ENCODE measurements at regions of chrX and their contacts with region 1.

Region 1: GRCh38 chrX:50691820-50692219 is 122.2 kb downstream of the SHROOM4 start:
- H3K4me3 ChIP-seq: no peak overlapping the region
- H3K27ac ChIP-seq: no peak overlapping the region
- H3K4me1 ChIP-seq: no peaks in the 10 kb centered on the region
- CTCF ChIP-seq: peak; percentile 33; the same call in 1 of the 2 replicates

Region 2: DNA sequence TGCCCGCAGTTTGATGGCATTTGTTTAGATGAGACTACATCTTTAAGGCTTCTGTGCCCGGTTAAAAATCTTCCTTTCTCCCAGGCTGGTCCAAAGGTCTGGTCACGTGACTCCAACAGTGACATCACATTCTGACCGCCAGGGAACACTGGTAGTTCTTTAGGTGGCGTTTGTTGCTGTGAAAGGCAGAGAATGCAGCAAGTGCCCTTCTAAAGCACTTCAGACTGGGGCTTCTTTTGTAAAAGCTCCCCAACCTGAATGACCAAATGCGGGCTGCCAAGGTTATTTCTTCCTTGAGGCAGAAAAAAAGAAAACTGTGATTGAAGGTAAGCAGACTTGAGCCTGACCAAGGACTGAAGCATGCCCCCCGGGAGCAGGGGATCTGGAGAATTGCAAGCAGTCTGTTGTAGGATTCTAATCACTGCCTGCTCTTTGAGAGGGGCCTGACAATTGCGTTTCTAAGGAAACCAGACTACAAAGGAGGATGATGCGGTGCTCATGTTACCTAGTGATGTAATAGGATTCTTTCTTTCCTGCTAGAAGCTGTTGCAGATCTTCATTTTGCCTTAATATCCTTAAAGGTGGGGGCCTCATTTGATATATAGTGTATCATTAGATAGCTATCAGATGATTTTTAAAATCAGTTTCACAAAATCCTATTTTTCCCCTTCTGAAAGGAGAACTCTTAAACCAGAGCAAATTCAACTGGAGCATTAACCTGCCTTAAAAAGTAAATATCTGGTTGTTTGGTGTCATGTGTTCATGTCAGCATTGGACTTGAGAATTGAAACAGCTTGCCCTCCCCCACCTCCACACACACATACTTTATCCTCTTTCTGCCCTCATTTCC is 624.2 kb before region 1 on chrX:
- CTCF ChIA-PET with region 1: no interaction called
- POLR2A ChIA-PET with region 1: no interaction called
- H3K4me3 ChIP-seq: peak overlapping the region; percentile 18
- H3K27ac ChIP-seq: no peak overlapping the region
- H3K4me1 ChIP-seq: peaks cover 22% of the 10 kb centered on the region
- CTCF ChIP-seq: no peak

Region 3: GRCh38 chrX:50180073-50180940 is 511.5 kb before region 1 on chrX:
- CTCF ChIA-PET with region 1: no interaction called
- POLR2A ChIA-PET with region 1: no interaction called
- H3K4me3 ChIP-seq: no peak overlapping the region
- H3K27ac ChIP-seq: no peak overlapping the region
- H3K4me1 ChIP-seq: no peaks in the 10 kb centered on the region
- CTCF ChIP-seq: no peak

Region 4: GRCh38 chrX:50680990-50681389 is 10.8 kb before region 1 on chrX:
- CTCF ChIA-PET with region 1: interaction called, 31 read pairs
- POLR2A ChIA-PET with region 1: no interaction called
- H3K4me3 ChIP-seq: no peak overlapping the region
- H3K27ac ChIP-seq: no peak overlapping the region
- H3K4me1 ChIP-seq: no peaks in the 10 kb centered on the region
- CTCF ChIP-seq: no peak

Region 5: GRCh38 chrX:50768801-50769200 is 77.0 kb after region 1 on chrX:
- CTCF ChIA-PET with region 1: no interaction called
- POLR2A ChIA-PET with region 1: no interaction called
- H3K4me3 ChIP-seq: no peak overlapping the region
- H3K27ac ChIP-seq: no peak overlapping the region
- H3K4me1 ChIP-seq: no peaks in the 10 kb centered on the region
- CTCF ChIP-seq: no peak

Region 6: GRCh38 chrX:50905334-50905733 is 213.5 kb after region 1 on chrX:
- CTCF ChIA-PET with region 1: interaction called, 16 read pairs
- POLR2A ChIA-PET with region 1: no interaction called
- H3K4me3 ChIP-seq: no peak overlapping the region
- H3K27ac ChIP-seq: no peak overlapping the region
- H3K4me1 ChIP-seq: no peaks in the 10 kb centered on the region
- CTCF ChIP-seq: no peak

Region 7: GRCh38 chrX:50988649-50989048 is 296.8 kb after region 1 on chrX:
- CTCF ChIA-PET with region 1: interaction called, 17 read pairs
- POLR2A ChIA-PET with region 1: no interaction called
- H3K4me3 ChIP-seq: no peak overlapping the region
- H3K27ac ChIP-seq: no peak overlapping the region
- H3K4me1 ChIP-seq: no peaks in the 10 kb centered on the region
- CTCF ChIP-seq: no peak

Region 8: DNA sequence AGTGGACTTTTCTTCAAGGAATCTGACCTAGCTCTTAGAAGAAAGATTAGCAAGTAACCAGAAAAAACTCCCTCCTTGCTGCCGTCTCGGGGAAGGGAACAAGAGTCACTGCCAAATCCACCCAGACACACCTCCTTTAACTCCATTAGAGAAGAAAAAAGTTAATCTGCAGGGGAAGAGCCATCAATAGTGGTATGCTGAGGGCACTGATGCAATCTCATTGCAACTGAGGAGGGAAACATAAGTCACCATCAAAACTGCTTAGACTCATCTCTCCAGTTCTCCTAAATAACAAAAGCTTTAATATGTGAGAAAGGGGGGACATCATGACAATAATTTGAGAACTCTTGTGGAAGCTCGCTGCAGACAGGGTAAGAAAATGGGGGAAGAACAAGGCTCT is 1426.4 kb after region 1 on chrX:
- CTCF ChIA-PET with region 1: no interaction called
- POLR2A ChIA-PET with region 1: no interaction called
- H3K4me3 ChIP-seq: no peak overlapping the region
- H3K27ac ChIP-seq: no peak overlapping the region
- H3K4me1 ChIP-seq: no peaks in the 10 kb centered on the region
- CTCF ChIP-seq: no peak

Measured in HEK293 (cell line).